Gastrocnemius medialis (tissue), 4 donors: ENCODE measurements at regions of chr14 and their contacts with region 1.

Region 1: DNA sequence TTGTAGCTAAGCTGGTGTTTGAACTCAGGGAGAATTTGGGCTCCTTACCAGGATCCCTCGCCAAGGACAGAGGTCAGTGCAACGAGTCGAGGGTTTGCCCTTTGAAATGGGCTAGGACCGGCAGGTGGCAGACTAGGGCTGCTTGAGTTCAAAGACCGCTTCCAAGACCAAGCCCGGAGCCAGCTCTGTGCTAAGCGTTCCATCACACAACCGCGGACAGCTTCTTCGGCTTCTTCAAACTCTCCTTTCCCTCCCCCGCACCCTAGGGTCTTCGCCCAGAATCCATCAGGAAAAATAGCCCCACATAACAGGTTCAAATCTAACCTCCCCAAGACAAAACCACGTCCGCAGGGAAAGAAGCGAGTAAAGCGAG is 705 bp upstream of the FLVCR2 start:
- DNase-seq: peak; percentile 83 to 91
- ATAC-seq: peak; percentile 76 to 81
- H3K4me3 ChIP-seq: peak overlapping the region; percentile 66 to 75 (median 71)
- H3K27ac ChIP-seq: peak overlapping the region; percentile 90 to 95 (median 93)
- H3K4me1 ChIP-seq: peaks cover 21 to 26% of the 10 kb centered on the region in 2 donors
- H3K27me3 ChIP-seq: no peaks in the 10 kb centered on the region
- CTCF ChIP-seq: peak; percentile 63 to 87 (median 78)
- POLR2A ChIP-seq: no peak

Region 2: GRCh38 chr14:74663884-74664283 is 913.8 kb before region 1 on chr14:
- in situ Hi-C with region 1: no loop called
- intact Hi-C with region 1: loop called (anchors 2 kb)
- DNase-seq: peak; percentile 96 to 98
- ATAC-seq: peak; percentile 97 to 98
- H3K4me3 ChIP-seq: no peak overlapping the region
- H3K27ac ChIP-seq: peak overlapping the region; percentile 80 to 88 (median 87)
- H3K4me1 ChIP-seq: peaks cover 34 to 58% of the 10 kb centered on the region in 2 donors
- H3K27me3 ChIP-seq: no peaks in the 10 kb centered on the region
- CTCF ChIP-seq: peak in 3 of 5 experiments; percentile 5 to 38 (median 37)
- POLR2A ChIP-seq: peak in 1 of 2 donors; percentile 17

Region 3: DNA sequence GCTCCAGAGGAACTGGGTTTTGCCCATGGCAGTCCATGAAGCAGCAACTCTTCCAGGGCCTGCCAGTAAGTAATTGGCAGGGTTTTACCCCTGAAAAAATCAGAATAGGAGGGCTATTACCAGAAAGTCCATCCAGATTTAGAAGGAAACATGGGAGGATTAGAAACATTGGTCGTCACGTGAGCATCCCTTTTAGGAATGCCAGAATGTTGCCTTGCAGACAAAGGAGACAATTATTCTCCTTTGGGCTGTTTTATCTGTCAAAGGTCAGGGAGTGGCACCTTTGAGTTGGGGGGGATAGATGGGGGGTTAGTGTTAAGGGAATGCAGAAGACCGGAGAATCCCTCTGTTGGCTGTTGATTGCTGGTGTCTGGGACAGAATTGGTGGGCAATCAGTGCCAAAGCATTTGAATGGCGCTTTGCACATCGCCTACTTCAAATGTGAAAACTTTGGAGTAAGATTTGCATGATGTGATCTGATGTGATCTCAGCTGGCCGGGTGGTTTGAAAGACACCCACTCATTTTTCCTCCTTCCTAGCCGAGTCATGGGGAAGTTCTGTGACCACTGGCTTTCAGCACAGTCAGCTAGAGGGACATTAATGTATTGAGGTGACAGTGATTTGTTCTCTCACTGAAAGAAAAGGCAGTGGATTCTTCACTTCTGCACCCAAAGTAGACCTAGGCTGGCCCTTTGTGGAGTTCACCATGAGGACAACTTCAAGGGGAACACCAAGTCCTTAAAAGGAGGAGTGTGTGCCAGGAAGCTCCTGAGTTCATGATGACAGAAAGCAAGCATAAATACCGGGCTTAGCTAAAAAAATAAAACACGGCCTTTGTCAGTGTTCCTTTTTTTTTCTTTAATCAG is 32.1 kb after region 1 on chr14:
- in situ Hi-C with region 1: no loop called
- intact Hi-C with region 1: loop called (anchors 2 kb)
- DNase-seq: peak; percentile 15 to 34
- ATAC-seq: peak; percentile 73 to 76
- H3K4me3 ChIP-seq: no peak overlapping the region
- H3K27ac ChIP-seq: peak overlapping the region in 3 of 4 donors; percentile 32 to 55 (median 49)
- H3K4me1 ChIP-seq: peaks cover 17 to 19% of the 10 kb centered on the region in 2 donors
- H3K27me3 ChIP-seq: no peaks in the 10 kb centered on the region
- CTCF ChIP-seq: no peak
- POLR2A ChIP-seq: no peak

Region 4: GRCh38 chr14:75648066-75648838 is 70.5 kb after region 1 on chr14:
- in situ Hi-C with region 1: loop called (anchors 5 kb)
- intact Hi-C with region 1: loop called (anchors 1 kb)
- DNase-seq: peak; percentile 79 to 90
- ATAC-seq: peak; percentile 90 to 97
- H3K4me3 ChIP-seq: no peak overlapping the region
- H3K27ac ChIP-seq: peak overlapping the region; percentile 79 to 88 (median 83)
- H3K4me1 ChIP-seq: peaks cover 34 to 38% of the 10 kb centered on the region in 2 donors
- H3K27me3 ChIP-seq: no peaks in the 10 kb centered on the region
- CTCF ChIP-seq: no peak
- POLR2A ChIP-seq: no peak

Region 5: GRCh38 chr14:75654127-75654732 is 76.5 kb after region 1 on chr14:
- in situ Hi-C with region 1: loop called (anchors 5 kb)
- intact Hi-C with region 1: loop called (anchors 1 kb)
- DNase-seq: peak; percentile 66 to 78
- ATAC-seq: peak; percentile 80 to 87
- H3K4me3 ChIP-seq: no peak overlapping the region
- H3K27ac ChIP-seq: peak overlapping the region in 3 of 4 donors; percentile 39 to 58 (median 49)
- H3K4me1 ChIP-seq: peaks cover 16 to 48% of the 10 kb centered on the region in 2 donors
- H3K27me3 ChIP-seq: no peaks in the 10 kb centered on the region
- CTCF ChIP-seq: peak; percentile 93 to 97 (median 95)
- POLR2A ChIP-seq: no peak

Region 6: DNA sequence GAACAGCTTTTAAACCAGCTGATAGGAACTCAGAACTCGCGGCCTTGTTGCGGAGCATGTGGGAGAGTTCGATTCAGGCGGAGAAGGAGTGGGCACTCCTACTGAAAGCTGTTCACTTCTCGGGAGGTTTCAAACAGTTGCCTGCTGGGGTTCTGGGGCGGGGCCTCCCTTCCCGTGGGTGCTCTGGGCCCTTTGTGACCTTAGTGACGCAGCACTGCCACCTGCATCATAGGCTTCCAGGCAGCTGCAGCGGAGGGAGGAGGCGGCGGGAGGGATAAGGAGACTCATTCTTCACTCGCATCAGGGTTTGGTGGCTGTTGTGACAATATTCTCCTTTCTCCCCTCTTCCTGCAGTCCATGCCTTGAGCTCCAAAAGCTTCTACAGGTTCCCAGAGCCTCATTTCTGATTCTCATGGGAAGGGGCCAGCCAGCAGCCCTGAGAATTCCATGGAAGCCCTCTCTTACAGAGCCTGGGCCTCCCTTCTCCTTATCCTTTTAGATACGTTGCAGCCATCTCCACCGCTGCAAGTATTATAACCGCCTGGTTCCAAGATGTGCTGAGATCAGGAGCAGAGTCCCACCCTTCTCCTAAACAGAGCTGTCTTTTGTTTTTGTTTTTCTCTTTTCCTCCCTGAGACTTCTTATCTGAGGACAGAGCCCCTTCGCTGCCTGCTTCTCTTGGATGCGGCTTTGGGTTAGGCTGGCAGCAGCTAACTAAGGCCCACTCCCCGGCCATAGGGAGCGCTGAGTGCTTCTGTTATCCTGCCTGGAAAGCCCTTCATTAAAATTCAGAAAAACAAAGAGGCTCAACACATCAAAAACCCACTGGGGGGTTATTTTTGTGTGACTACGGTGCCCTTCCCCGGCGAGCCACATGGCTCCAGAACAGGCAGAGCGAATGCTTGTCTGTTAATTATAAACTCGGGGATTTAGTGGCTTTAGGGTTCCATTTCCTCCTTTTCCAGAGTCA is 506.4 kb after region 1 on chr14:
- in situ Hi-C with region 1: no loop called
- intact Hi-C with region 1: loop called (anchors 2 kb)
- DNase-seq: no peak
- ATAC-seq: no peak
- H3K4me3 ChIP-seq: no peak overlapping the region
- H3K27ac ChIP-seq: peak overlapping the region in 2 of 4 donors; percentile 75 to 82
- H3K4me1 ChIP-seq: peaks cover 50 to 67% of the 10 kb centered on the region in 2 donors
- H3K27me3 ChIP-seq: no peaks in the 10 kb centered on the region
- CTCF ChIP-seq: no peak
- POLR2A ChIP-seq: no peak